ENCODE measurements at regions of chr18 and their contacts with region 1.

Region 1: DNA sequence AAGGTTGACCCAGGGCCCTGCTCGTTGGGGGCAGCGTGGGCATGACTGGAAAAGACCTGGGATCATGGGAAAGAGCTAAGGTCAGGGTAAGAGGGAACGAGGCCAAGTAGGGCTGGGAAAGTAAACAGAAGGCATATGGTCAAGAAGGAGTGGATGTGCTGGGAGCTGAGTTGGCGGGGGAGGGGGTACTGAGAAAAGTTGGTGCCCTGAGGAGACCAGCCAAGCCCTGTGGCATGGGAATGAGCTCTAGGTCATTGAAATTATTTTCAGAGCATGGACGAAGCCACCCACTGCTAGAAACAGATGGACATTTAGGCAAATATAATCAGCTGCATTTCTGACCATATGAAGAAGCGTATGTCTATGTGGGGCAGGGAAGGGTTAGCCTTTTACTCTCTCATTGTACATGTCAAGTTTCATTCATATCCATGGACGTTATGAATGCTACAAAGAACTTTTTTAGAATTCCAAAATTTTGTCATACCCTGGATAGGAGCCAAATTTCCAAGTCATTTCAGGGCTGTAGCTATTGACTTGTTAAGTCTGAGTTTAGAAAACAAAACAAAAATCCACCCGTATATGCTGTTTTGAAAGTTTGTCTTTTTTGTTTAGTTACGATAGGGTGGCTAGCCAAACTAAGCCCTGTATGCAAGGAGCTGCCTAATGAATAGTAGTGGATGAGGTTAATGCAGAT is 19.1 kb downstream of the MAPRE2 start:
- DNase-seq: no peak
- H3K4me3 ChIP-seq: no peak overlapping the region
- H3K27ac ChIP-seq: no peak overlapping the region
- H3K27me3 ChIP-seq: no peaks in the 10 kb centered on the region
- CTCF ChIP-seq: no peak

Region 2: DNA sequence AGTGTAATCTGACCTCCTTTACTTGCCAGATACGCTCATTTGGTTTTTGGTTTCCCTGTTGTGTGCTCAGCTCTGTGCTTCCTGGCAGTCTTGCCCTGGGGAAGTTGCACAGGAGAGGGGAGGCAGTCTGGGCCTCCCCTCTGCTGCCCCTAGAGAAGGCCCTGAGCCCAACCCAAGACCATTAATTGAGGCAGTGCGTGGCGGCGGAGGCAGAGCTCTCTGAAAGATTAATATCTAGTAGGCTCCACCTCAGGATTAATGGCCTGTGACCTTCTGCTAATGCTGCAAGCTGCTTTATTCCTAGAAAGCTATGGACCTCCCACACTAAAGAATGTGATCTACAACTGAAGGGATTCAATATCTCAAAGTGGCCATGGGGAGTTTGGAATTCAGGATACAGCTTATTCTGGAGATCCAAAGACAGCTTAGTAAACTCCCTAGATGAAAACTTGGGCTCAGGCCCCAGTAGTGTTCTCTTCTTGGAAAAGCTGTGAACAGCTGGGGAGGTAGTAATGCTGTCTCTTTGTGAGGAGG is 60.4 kb before region 1 on chr18:
- CTCF ChIA-PET with region 1: no interaction called
- POLR2A ChIA-PET with region 1: interaction called, 12 read pairs
- DNase-seq: no peak
- H3K4me3 ChIP-seq: no peak overlapping the region
- H3K27ac ChIP-seq: no peak overlapping the region
- H3K27me3 ChIP-seq: peaks cover 4% of the 10 kb centered on the region
- CTCF ChIP-seq: no peak

Region 3: DNA sequence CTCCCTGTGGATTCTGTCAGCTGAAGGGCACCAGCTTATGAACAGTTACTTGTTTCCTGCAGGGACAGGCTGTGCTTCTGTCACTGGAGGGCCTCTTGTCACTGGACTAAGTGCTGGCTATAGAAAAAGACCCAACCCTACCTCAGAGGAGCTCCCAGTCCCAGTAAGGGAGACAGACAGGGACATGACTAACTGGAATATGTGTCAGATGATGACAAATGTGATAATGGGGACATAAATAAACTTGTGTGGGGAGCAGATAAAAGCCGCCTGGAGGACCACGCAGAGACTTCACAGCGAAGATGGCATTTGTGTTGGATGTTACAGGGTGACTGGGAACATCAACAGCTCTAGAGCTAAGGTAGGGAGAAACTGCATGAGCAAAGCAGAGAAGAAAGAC is 76.0 kb after region 1 on chr18:
- CTCF ChIA-PET with region 1: no interaction called
- POLR2A ChIA-PET with region 1: no interaction called
- DNase-seq: no peak
- H3K4me3 ChIP-seq: no peak overlapping the region
- H3K27ac ChIP-seq: no peak overlapping the region
- H3K27me3 ChIP-seq: no peaks in the 10 kb centered on the region
- CTCF ChIP-seq: no peak

Measured in AG04450 (cell line).